Stomach (tissue), 19 donors: ENCODE measurements at regions of chr7 and their contacts with region 1.

Region 1: GRCh38 chr7:135980665-135981180 is 3.6 kb upstream of the MTPN start:
- DNase-seq: peak; percentile 5 to 29
- H3K4me3 ChIP-seq: peak overlapping the region in 1 of 4 donors; percentile 8
- H3K27ac ChIP-seq: peak overlapping the region in 4 of 5 donors; percentile 34 to 68 (median 56)
- H3K4me1 ChIP-seq: peaks cover 4 to 25% (median 12%) of the 10 kb centered on the region in 4 donors
- H3K27me3 ChIP-seq: no peaks in the 10 kb centered on the region
- CTCF ChIP-seq: no peak
- EP300 ChIP-seq: no peak
- POLR2A ChIP-seq: no peak

Region 2: DNA sequence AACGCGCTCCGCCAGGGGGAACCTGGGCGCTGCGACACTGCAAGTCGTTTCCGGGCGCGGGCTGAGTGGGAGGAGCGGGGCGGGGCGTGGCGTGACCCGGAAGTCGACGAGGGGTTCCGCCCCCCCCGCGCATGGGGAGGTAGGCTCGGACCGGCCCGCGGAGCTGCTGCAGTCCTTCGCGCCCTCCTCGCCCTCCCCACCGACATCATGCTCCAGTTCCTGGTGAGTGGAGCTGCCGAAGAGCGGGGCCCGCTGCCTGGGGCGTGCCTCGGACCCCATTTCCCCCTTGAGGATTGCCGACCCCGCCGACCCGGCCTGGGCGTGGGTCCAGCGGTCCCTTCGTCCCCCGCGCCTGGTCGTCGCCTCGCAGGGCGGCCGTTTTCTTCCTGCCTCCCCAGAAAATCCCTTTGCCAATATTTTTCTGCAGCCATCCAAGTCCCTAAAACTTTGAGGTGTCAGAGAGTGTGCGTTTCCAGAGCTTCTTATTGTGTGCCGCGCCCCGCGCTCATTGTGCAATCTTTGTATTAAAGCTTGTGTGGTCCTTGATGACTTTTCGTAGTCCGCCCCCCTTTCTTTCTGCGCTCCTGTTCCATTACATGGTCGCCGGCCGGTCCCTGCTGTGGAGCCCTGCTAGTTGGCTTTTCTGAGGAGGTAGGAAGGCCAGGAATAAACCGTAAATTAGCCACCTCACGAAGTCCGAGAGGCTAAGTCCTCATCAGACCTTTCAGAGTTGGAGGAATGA is 318.2 kb before region 1 on chr7 and contains the start of gene STMP1:
- intact Hi-C with region 1: loop called (anchors 10 kb)
- DNase-seq: peak; percentile 97 to 98
- H3K4me3 ChIP-seq: peak within 1 kb of the TSS; percentile 77 to 96 (median 84)
- H3K27ac ChIP-seq: peak within 1 kb of the TSS; percentile 90 to 96 (median 95)
- H3K4me1 ChIP-seq: peaks cover 15 to 53% (median 31%) of the 10 kb centered on the region in 4 donors
- H3K27me3 ChIP-seq: no peaks in the 10 kb centered on the region
- CTCF ChIP-seq: peak in 4 of 7 experiments; percentile 82 to 90 (median 87)
- EP300 ChIP-seq: no peak
- POLR2A ChIP-seq: peak in 1 of 4 donors; percentile 89
- total RNA-seq, gene STMP1: 3.5 to 20.7 (median 12.7) TPM

Region 3: DNA sequence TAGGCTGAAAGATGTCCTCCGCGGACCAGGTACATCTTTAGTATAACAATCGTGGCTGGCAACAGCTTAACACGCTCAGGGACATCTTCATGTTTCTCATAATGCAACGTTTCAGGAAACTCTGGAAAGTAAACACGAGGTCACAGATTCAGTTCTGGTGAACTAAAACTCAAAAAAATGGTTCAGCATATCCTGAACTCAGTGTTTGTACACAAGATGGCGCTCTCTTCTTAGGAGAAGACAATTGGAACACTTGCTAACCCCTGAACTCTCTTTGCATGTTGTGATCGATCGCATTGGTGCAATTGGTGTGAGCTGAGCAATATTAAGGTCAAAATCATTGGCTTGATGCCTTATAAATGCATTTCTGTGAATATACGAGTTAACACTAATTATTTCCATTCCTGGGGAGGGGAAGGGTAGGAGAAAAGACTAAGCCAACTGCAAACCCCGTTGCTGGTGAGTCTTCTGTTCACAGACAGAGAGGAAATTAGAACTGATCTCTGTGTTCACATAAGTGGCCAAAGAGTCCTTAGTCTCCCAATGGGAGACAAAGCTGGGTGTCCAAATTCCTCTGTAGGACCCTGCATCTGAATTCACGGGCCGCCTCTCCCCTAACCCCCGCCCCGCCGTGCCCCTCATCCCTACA is 179.6 kb before region 1 on chr7:
- intact Hi-C with region 1: no loop called
- DNase-seq: peak in 1 of 2 donors; percentile 85
- H3K4me3 ChIP-seq: no peak overlapping the region
- H3K27ac ChIP-seq: no peak overlapping the region
- H3K4me1 ChIP-seq: peaks cover 0 to 24% (median 10%) of the 10 kb centered on the region in 4 donors
- H3K27me3 ChIP-seq: peaks cover 0 to 6% (median 0%) of the 10 kb centered on the region in 3 donors
- CTCF ChIP-seq: peak in 5 of 7 experiments; percentile 57 to 82 (median 62)
- EP300 ChIP-seq: no peak
- POLR2A ChIP-seq: no peak

Region 4: GRCh38 chr7:136480901-136481300 is 500.2 kb after region 1 on chr7:
- intact Hi-C with region 1: no loop called
- DNase-seq: no peak
- H3K4me3 ChIP-seq: no peak overlapping the region
- H3K27ac ChIP-seq: no peak overlapping the region
- H3K4me1 ChIP-seq: no peaks in the 10 kb centered on the region
- H3K27me3 ChIP-seq: no peaks in the 10 kb centered on the region
- CTCF ChIP-seq: no peak
- EP300 ChIP-seq: no peak
- POLR2A ChIP-seq: no peak

Region 5: DNA sequence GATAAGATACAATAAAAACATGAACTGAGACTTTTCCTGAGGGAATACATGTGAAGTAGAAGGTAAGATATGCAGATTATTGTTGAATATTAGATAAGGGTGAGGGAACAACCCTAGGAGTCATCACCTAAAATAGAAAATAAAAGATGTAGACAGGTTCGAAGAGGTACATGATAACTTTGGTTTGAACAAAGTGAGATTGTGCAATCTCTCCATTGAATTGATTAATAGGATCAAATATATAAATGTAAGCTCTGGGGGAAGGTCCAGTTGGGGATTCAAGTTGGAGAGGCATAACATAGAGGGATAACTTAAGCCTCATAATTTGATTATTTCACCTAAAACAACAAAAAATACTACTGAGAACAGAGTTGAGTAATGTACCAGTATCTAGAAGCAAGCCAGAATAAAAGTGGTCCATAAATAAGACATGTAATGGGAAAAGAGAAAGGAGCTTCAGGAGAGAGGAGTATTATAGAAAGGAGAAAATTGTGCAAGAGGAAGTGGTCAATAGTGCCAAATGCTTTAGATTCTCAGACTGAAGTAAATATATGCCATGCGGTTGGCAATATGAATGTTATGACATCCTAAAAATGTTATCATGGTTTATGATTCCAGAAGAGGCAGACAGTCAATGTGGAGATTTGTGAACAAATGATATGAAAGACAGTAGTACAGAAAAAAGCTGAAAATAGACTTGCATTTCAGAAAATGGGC is 605.4 kb after region 1 on chr7:
- intact Hi-C with region 1: no loop called
- DNase-seq: no peak
- H3K4me3 ChIP-seq: no peak overlapping the region
- H3K27ac ChIP-seq: no peak overlapping the region
- H3K4me1 ChIP-seq: no peaks in the 10 kb centered on the region
- H3K27me3 ChIP-seq: no peaks in the 10 kb centered on the region
- CTCF ChIP-seq: no peak
- EP300 ChIP-seq: no peak
- POLR2A ChIP-seq: no peak